Activated naive CD4-positive, alpha-beta T cell treated with anti-CD3 and anti-CD28 coated beads for 36 hours (primary cell): ENCODE measurements at regions of chr18 and their contacts with region 1.

Region 1: DNA sequence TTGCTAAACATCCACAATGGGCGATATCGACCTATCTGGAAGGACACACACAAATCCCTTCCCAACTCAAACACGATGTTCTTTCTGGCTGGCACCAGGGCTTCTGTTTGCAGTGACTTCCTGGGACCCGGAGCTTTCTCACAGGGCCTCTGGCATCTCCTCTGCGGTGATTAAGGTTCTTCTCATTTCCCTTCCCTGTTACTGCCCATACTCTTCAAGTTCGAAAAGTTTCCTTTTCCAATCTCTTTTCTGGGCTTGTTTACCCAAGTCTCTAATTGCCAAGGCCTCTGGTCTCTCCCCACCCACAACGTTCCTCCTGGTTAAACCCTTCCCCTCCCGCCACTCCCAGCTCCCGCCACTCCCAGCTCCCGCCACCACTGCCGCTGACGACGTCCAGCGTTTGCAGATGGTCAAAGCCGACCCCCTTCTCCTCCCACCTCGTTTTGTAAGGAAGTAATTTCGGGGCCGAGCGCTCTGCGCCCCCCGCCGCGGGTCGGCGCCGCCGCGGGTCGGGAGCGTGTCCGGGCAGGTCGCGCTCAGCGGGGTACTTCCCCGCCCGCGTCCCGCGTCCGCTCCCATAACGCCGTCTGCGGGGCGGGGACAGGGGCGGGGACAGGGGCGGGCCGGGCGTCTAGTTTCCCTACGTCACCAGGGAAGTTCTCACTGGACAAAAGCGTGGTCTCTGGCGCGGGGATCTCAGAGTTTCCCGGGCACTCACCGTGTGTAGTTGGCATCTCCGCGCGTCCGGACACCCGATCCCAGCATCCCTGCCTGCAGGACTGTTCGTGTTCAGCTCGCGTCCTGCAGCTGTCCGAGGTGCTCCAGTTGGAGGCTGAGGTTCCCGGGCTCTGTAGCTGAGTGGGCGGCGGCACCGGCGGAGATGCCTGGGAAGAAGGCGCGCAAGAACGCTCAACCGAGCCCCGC is at the start of gene PMAIP1:
- DNase-seq: peak; percentile 90
- H3K4me3 Mint-ChIP-seq: peak within 1 kb of the TSS; percentile 94
- H3K27ac Mint-ChIP-seq: peak within 1 kb of the TSS; percentile 99
- H3K4me1 Mint-ChIP-seq: peaks cover 29% of the 10 kb centered on the region
- H3K27me3 Mint-ChIP-seq: no peaks in the 10 kb centered on the region
- total RNA-seq, gene PMAIP1: 132 to 141 TPM

Region 2: DNA sequence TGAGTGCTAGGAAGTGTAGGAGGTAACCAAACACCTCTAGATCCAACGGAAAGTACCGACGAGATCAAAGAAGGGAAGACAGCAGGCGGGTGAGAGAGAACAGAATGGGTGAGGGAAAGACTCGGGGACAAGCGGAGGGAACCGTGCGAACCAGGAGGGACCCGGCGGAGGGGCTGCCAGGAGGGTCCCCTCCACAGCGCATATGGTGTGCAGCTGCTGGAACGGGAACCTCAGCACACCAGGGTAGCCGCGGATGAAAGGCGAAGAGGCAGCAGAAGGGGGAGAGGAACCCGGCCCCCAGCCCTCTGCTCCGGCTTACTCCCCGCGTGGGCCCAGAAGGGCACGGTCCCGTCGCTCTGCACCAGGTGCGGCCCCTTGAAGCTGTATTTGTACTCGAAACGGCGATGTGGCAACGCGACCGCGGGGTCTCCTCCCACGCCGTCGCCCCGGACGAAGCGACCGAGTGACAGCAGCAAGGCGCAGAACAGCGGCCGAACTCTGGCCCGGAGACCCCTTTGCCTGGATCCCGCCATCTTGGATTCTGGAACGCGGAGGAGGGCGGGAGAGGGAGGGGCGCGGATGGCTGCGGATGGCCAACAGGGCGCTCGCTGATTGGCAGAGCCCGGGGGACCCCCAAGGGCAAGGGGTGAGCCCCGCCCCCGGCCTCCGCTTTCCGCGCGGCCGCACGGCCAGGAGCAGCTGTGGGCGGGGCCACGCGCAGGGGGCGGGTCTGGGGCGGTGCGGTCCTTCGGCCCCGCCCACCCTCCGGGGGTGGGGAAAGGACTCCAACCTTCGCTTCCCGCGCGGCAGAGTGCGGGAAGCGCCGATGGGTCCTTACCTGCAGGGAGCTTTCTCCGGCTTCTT is 540.6 kb before region 1 on chr18 and contains the start of gene LMAN1:
- CTCF ChIA-PET with region 1: no interaction called
- intact Hi-C with region 1: loop called (anchors 1 kb)
- DNase-seq: peak; percentile 96
- H3K4me3 Mint-ChIP-seq: peak within 1 kb of the TSS; percentile 98
- H3K27ac Mint-ChIP-seq: peak within 1 kb of the TSS; percentile 98
- H3K4me1 Mint-ChIP-seq: peaks cover 36% of the 10 kb centered on the region
- H3K27me3 Mint-ChIP-seq: no peaks in the 10 kb centered on the region
- total RNA-seq, gene LMAN1: 146 to 151 TPM

Region 3: GRCh38 chr18:59846814-59847490 is 52.6 kb before region 1 on chr18:
- CTCF ChIA-PET with region 1: no interaction called
- intact Hi-C with region 1: loop called (anchors 1 kb)
- DNase-seq: peak; percentile 83
- H3K4me3 Mint-ChIP-seq: no peak overlapping the region
- H3K27ac Mint-ChIP-seq: peak overlapping the region; percentile 1
- H3K4me1 Mint-ChIP-seq: peaks cover 16% of the 10 kb centered on the region
- H3K27me3 Mint-ChIP-seq: no peaks in the 10 kb centered on the region

Region 4: GRCh38 chr18:59885579-59886163 is 13.9 kb before region 1 on chr18:
- CTCF ChIA-PET with region 1: interaction called, 9 read pairs
- intact Hi-C with region 1: loop called (anchors 1 kb)
- DNase-seq: peak; percentile 59
- H3K4me3 Mint-ChIP-seq: peak overlapping the region; percentile 26
- H3K27ac Mint-ChIP-seq: peak overlapping the region; percentile 68
- H3K4me1 Mint-ChIP-seq: peaks cover 37% of the 10 kb centered on the region
- H3K27me3 Mint-ChIP-seq: no peaks in the 10 kb centered on the region

Region 5: GRCh38 chr18:59910967-59911366 is 11.4 kb after region 1 on chr18:
- CTCF ChIA-PET with region 1: no interaction called
- intact Hi-C with region 1: no loop called
- DNase-seq: no peak
- H3K4me3 Mint-ChIP-seq: no peak overlapping the region
- H3K27ac Mint-ChIP-seq: no peak overlapping the region
- H3K4me1 Mint-ChIP-seq: peaks cover 32% of the 10 kb centered on the region
- H3K27me3 Mint-ChIP-seq: no peaks in the 10 kb centered on the region

Region 6: DNA sequence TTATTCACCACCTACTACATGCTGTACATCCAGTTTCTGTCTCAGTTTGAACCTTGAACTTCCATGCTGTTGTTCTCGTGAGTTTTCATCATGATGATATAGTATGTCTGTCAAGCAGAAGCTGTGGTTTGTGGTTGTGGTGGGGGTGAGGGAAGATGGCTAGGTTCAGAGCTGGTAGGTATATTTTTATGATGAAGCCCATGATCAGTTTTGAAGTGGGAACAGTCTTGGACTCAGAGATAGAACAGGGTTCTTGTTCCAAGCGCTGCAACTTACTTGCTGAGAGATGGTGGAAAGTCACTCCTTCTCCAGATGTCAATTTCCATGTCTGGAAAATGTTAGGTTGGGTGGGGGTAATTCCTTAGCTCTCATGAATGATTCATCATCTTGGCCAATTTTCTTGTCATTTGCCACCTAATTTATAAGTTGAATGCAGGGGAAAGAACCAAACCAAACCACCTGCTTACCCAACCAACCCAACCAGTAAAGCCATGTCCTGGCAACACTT is 21.9 kb after region 1 on chr18:
- CTCF ChIA-PET with region 1: interaction called, 3 read pairs
- intact Hi-C with region 1: loop called (anchors 1 kb)
- DNase-seq: peak; percentile 82
- H3K4me3 Mint-ChIP-seq: no peak overlapping the region
- H3K27ac Mint-ChIP-seq: no peak overlapping the region
- H3K4me1 Mint-ChIP-seq: peaks cover 38% of the 10 kb centered on the region
- H3K27me3 Mint-ChIP-seq: peaks cover 6% of the 10 kb centered on the region

Region 7: DNA sequence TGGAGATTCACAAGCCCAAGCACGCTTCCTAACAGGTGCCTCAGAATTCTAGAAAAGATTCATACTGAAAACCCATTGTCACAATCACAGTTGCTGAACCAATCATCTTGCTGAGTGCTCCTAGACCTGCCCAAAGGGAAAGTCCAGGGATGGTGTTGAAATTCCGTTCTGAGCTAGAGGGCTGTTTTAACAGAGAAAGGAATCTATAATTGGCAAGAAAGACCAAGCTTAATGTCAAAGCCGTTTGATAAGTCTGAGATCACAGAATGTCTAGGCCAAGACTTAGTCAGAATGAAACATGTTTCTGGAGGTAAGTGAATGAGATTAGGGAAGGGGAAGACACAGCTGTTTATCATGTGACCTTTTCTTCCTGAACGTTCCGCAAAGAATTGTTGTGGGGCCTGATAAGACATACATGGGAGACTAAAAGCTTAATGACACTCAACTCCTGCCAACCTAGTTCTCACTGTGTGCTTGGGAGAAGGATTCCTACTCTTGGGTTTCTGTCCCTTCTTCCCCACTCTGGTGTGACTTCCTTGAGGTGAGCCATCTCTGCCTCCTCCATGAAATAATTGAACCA is 27.8 kb after region 1 on chr18:
- CTCF ChIA-PET with region 1: interaction called, 4 read pairs
- intact Hi-C with region 1: loop called (anchors 1 kb)
- DNase-seq: peak; percentile 77
- H3K4me3 Mint-ChIP-seq: no peak overlapping the region
- H3K27ac Mint-ChIP-seq: peak overlapping the region; percentile 83
- H3K4me1 Mint-ChIP-seq: peaks cover 32% of the 10 kb centered on the region
- H3K27me3 Mint-ChIP-seq: peaks cover 6% of the 10 kb centered on the region

Region 8: GRCh38 chr18:59950215-59950944 is 50.8 kb after region 1 on chr18:
- CTCF ChIA-PET with region 1: interaction called, 3 read pairs
- intact Hi-C with region 1: loop called (anchors 1 kb)
- DNase-seq: peak; percentile 18
- H3K4me3 Mint-ChIP-seq: no peak overlapping the region
- H3K27ac Mint-ChIP-seq: no peak overlapping the region
- H3K4me1 Mint-ChIP-seq: peaks cover 20% of the 10 kb centered on the region
- H3K27me3 Mint-ChIP-seq: no peaks in the 10 kb centered on the region